ENCODE measurements at regions of chr7 and their contacts with region 1.

Region 1: DNA sequence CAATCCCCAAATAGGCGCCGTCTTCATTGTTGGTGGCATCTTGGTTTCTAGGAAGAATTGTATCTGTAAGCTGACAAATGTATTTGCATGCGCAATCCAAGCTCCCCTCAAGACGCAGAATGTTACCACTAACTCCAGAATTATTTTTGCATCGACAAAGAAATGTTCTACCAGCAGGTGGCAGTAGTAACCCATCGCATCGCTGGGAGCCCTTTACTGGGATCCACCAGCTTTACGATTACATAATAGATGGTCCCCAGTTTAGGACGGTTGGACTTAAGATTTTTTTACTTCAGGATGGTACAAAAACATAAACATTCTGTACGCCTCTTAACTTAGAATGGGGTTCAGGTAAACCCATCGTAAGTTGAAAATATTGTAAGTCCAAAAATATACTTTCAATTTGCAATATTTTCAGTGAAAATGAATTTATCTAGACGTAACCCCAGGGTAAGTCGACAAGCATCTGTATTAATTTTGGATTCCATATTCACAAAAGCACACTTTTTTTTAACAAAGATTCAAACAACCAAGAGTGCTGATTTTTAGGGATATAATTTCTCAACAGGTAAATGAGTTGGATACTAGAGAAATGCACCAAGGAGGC is 114.0 kb upstream of the COBL start:
- DNase-seq: peak; percentile 43
- ATAC-seq: peak; percentile 63
- H3K4me3 ChIP-seq: no peak overlapping the region
- H3K27ac ChIP-seq: no peak overlapping the region
- H3K4me1 ChIP-seq: no peaks in the 10 kb centered on the region
- H3K27me3 ChIP-seq: peaks cover 0 to 3% of the 10 kb centered on the region in 2 experiments; a peak in 1 of 5 replicates
- CTCF ChIP-seq: peak; percentile 86
- EP300 ChIP-seq: no peak
- POLR2A ChIP-seq: no peak
- RAD21 ChIP-seq: peak; percentile 74; the same call in 1 of the 2 replicates

Region 2: DNA sequence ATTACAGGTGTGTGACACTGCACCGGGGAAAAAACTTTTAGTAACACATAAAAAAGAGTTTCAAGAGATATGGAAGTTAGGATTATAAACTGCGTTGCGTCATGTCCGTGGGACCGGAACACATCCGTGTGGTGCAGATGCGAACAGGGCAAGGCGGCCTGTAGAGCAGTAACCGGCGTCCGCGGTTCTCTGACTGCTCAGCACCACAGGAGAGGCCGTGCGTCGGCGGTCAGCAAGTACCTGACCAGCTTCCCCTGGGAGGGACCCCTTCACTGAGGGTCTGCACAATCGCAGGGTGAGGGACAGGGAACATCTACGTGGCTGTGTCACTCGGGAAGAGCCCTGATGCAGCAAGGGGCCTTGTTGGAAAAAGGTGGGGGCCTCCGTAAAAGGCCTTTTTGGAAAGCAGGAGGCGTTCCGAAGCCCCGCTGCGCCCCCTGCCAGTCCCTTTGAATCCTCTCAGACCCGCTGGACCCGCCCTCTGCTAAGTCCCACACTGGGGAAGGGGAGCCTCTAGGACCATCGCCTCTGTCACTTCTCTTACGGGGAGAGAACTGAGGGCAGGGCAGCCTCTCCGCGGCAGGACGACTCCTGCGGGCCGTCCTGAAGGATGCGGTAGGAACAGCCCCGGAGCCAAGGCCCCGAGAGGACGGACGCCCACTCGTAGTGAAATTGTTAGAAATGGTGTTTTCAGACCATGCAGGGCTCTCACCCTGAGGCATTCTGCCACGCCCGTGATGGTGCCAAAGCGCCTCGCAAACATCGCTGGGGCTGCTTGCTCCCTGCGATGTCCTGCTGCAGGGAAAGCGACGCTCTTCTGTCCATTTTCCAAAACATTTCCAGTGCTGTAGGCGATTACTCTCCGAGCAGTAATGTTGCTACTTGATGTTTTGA is 657.7 kb after region 1 on chr7:
- CTCF ChIA-PET with region 1: no interaction called
- POLR2A ChIA-PET with region 1: no interaction called
- in situ Hi-C with region 1: no loop called
- intact Hi-C with region 1: loop called (anchors 2 kb)
- DNase-seq: no peak
- ATAC-seq: peak; percentile 81
- H3K4me3 ChIP-seq: no peak overlapping the region
- H3K27ac ChIP-seq: no peak overlapping the region
- H3K4me1 ChIP-seq: no peaks in the 10 kb centered on the region
- H3K27me3 ChIP-seq: no peaks in the 10 kb centered on the region
- CTCF ChIP-seq: peak; percentile 31; the same call in 1 of the 2 replicates
- EP300 ChIP-seq: no peak
- POLR2A ChIP-seq: no peak
- RAD21 ChIP-seq: no peak

Region 3: GRCh38 chr7:52168085-52168484 is 737.5 kb after region 1 on chr7:
- CTCF ChIA-PET with region 1: no interaction called
- POLR2A ChIA-PET with region 1: no interaction called
- in situ Hi-C with region 1: no loop called
- intact Hi-C with region 1: loop called (anchors 10 kb)
- DNase-seq: peak; percentile 11
- ATAC-seq: peak; percentile 53; the same call in 1 of the 3 replicates
- H3K4me3 ChIP-seq: no peak overlapping the region
- H3K27ac ChIP-seq: no peak overlapping the region
- H3K4me1 ChIP-seq: no peaks in the 10 kb centered on the region
- H3K27me3 ChIP-seq: no peaks in the 10 kb centered on the region
- CTCF ChIP-seq: peak; percentile 36
- EP300 ChIP-seq: no peak
- POLR2A ChIP-seq: no peak
- RAD21 ChIP-seq: no peak

Region 4: GRCh38 chr7:52257890-52258289 is 827.3 kb after region 1 on chr7:
- CTCF ChIA-PET with region 1: interaction called, 3 read pairs
- POLR2A ChIA-PET with region 1: no interaction called
- in situ Hi-C with region 1: loop called (anchors 10 kb)
- intact Hi-C with region 1: loop called (anchors 2 kb)
- DNase-seq: no peak
- ATAC-seq: no peak
- H3K4me3 ChIP-seq: no peak overlapping the region
- H3K27ac ChIP-seq: no peak overlapping the region
- H3K4me1 ChIP-seq: no peaks in the 10 kb centered on the region
- H3K27me3 ChIP-seq: no peaks in the 10 kb centered on the region
- CTCF ChIP-seq: no peak
- EP300 ChIP-seq: no peak
- POLR2A ChIP-seq: no peak
- RAD21 ChIP-seq: no peak

Region 5: DNA sequence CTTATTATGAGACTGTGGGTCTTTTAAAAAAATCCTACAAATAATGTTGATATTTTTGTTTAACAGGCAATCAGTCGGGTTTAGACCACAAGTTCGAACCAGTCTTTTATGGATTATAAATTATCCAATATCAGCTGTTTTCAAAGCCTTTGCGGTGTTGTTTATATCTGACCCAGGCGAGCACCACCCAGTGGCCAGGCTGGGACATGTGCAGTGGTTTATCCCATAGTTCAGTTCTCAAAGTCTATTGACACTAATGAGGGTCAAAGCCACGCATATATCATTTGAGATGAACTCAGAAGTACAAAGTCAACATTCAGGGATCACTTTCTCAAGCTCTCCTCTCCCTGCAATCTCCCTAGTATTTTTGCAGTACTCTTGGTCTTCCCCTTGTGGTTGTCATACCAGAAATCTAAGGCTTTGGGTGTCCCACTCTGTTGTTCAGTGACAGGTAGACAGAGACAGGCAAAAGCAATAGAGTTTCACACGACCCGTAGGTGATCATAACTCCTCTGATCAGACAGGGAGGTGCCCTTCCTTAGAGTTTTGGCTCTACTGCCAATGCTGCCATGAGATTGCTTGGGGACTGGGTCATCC is 1487.5 kb after region 1 on chr7:
- CTCF ChIA-PET with region 1: no interaction called
- POLR2A ChIA-PET with region 1: no interaction called
- in situ Hi-C with region 1: loop called (anchors 25 kb)
- intact Hi-C with region 1: loop called (anchors 2 kb)
- DNase-seq: no peak
- ATAC-seq: peak; percentile 74
- H3K4me3 ChIP-seq: no peak overlapping the region
- H3K27ac ChIP-seq: no peak overlapping the region
- H3K4me1 ChIP-seq: no peaks in the 10 kb centered on the region
- H3K27me3 ChIP-seq: no peaks in the 10 kb centered on the region
- CTCF ChIP-seq: peak; percentile 37
- EP300 ChIP-seq: no peak
- POLR2A ChIP-seq: no peak
- RAD21 ChIP-seq: no peak